PC-3 (cell line): ENCODE measurements at regions of chrX and their contacts with region 1.

Region 1: GRCh38 chrX:23901805-23902204 is 5.9 kb downstream of the APOO start:
- DNase-seq: peak; percentile 70
- ATAC-seq: peak; percentile 74
- H3K4me3 ChIP-seq: no peak overlapping the region
- H3K27ac ChIP-seq: peak overlapping the region; percentile 92
- H3K4me1 ChIP-seq: peaks cover 61% of the 10 kb centered on the region
- H3K27me3 ChIP-seq: no peaks in the 10 kb centered on the region
- CTCF ChIP-seq: peak; percentile 67

Region 2: DNA sequence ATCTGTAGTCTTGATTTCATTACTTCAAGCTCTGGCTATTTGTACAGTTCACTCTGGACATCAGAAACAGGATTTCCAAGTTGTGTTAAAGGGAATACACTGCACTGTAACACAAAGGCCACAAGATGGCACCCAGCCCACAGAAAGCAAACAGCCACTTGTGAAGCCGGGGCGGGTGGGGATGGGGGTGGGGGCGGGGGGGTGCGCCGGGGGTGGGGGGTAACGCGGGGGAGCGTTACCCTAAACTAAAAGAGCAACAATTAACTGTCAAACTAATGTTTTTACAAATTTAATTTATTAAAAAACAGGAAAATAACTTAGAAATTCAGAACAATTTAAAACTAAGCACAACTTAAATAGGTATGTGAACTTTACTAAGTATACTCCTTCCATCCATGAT is 207.2 kb before region 1 on chrX:
- CTCF ChIA-PET with region 1: interaction called, 8 read pairs
- POLR2A ChIA-PET with region 1: no interaction called
- intact Hi-C with region 1: loop called (anchors 1 kb)
- DNase-seq: peak; percentile 72
- ATAC-seq: peak; percentile 74
- H3K4me3 ChIP-seq: no peak overlapping the region
- H3K27ac ChIP-seq: no peak overlapping the region
- H3K4me1 ChIP-seq: no peaks in the 10 kb centered on the region
- H3K27me3 ChIP-seq: no peaks in the 10 kb centered on the region
- CTCF ChIP-seq: peak; percentile 42; the same call in 1 of the 2 replicates

Region 3: GRCh38 chrX:23742697-23743622 is 158.8 kb before region 1 on chrX and contains the start of gene ACOT9:
- CTCF ChIA-PET with region 1: no interaction called
- POLR2A ChIA-PET with region 1: interaction called, 4 read pairs
- intact Hi-C with region 1: loop called (anchors 2 kb)
- DNase-seq: peak; percentile 97
- ATAC-seq: peak; percentile 96
- H3K4me3 ChIP-seq: peak within 1 kb of the TSS; percentile 96
- H3K27ac ChIP-seq: peak within 1 kb of the TSS; percentile 92
- H3K4me1 ChIP-seq: peaks cover 11% of the 10 kb centered on the region
- H3K27me3 ChIP-seq: no peaks in the 10 kb centered on the region
- CTCF ChIP-seq: no peak
- total RNA-seq, gene ACOT9: 66.2 and 75.6 TPM in 2 replicates

Region 4: DNA sequence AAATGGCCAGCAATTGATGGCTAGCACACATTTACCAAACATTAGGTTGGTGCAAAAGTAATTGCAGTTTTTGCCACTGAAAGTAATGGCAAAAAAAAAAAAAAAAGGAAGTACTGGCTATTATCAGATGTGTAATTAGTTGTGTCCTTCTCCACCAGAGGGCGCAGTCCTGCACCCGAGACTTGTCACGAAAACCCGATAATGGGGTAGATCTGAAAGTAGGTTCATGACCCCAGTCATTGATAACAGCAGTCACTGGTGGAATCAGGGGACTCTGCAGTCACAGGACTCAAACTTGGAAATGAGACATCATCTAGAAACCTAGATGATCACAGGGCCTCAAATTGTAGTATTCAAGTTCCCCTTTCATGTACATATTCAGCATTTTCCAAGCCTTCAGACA is 145.6 kb before region 1 on chrX:
- CTCF ChIA-PET with region 1: no interaction called
- POLR2A ChIA-PET with region 1: no interaction called
- intact Hi-C with region 1: loop called (anchors 1 kb)
- DNase-seq: peak; percentile 55
- ATAC-seq: no peak
- H3K4me3 ChIP-seq: no peak overlapping the region
- H3K27ac ChIP-seq: no peak overlapping the region
- H3K4me1 ChIP-seq: peaks cover 24% of the 10 kb centered on the region
- H3K27me3 ChIP-seq: no peaks in the 10 kb centered on the region
- CTCF ChIP-seq: peak; percentile 75